ENCODE measurements at regions of chr2 and their contacts with region 1.

Region 1: GRCh38 chr2:160324161-160324800 is 124.2 kb upstream of the ITGB6 start:
- DNase-seq: peak; percentile 35 to 60 (median 49)
- H3K4me3 ChIP-seq: no peak overlapping the region
- H3K4me3 Mint-ChIP-seq: no peak overlapping the region
- H3K27ac ChIP-seq: no peak overlapping the region
- H3K27ac Mint-ChIP-seq: peak overlapping the region in 2 of 7 donors; percentile 16 to 51
- H3K4me1 ChIP-seq: peaks cover 10 to 14% of the 10 kb centered on the region in 2 donors
- H3K4me1 Mint-ChIP-seq: peaks cover 47% of the 10 kb centered on the region
- H3K27me3 ChIP-seq: no peaks in the 10 kb centered on the region
- H3K27me3 Mint-ChIP-seq: no peaks in the 10 kb centered on the region
- CTCF ChIP-seq: peak; percentile 87

Region 2: DNA sequence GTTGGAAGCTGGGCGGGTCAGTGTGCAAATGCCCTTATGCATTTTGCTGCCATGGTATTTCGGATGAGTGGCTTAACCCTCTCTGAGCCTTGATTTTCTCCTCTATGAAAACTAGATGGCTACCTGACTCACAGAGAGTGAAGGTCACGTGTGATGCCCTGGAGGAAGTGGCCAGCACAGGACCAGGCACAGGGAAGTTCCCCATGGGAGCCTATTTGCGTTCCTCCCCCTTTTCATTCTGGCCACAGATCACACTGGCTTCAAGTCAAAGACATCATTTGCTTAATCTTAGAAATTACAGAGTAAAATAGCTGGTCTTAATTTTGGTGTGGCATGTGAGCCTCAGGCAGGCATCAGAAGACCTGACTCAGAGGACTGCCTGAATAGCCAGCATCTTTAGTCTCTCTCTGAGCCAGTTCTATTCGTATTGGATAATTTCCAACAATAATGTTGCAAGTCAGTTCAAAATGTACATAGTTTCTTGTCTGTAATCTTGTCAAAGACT is 468.7 kb before region 1 on chr2:
- intact Hi-C with region 1: no loop called
- DNase-seq: peak; percentile 38 to 86 (median 49)
- H3K4me3 ChIP-seq: peak overlapping the region in 1 of 3 experiments; percentile 14
- H3K4me3 Mint-ChIP-seq: peak overlapping the region in 1 of 2 donors; percentile 68
- H3K27ac ChIP-seq: peak overlapping the region; percentile 2 to 14
- H3K27ac Mint-ChIP-seq: peak overlapping the region in 4 of 7 donors; percentile 48 to 81 (median 66)
- H3K4me1 ChIP-seq: peaks cover 25 to 33% of the 10 kb centered on the region in 2 donors
- H3K4me1 Mint-ChIP-seq: peaks cover 35% of the 10 kb centered on the region
- H3K27me3 ChIP-seq: no peaks in the 10 kb centered on the region
- H3K27me3 Mint-ChIP-seq: no peaks in the 10 kb centered on the region
- CTCF ChIP-seq: no peak

Region 3: DNA sequence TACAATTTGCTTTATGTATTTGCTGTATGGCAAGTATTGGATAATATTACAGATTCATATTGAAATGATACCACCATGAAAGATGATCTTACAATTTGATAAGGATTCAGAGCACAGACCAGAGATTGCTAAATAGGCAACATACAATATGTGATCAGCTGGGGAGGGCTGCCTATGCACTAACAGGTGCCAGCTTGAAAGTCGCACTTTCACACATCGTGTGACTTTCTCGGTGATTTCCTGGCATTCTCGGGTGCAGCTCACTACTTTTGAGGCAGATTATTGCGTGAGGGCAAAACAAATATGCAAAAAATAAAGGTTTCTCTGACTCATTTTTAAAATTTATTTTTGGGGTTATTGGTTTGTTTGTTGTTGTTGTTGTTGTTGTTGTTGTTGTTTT is 133.3 kb after region 1 on chr2:
- intact Hi-C with region 1: no loop called
- DNase-seq: no peak
- H3K4me3 ChIP-seq: no peak overlapping the region
- H3K4me3 Mint-ChIP-seq: no peak overlapping the region
- H3K27ac ChIP-seq: no peak overlapping the region
- H3K27ac Mint-ChIP-seq: no peak overlapping the region
- H3K4me1 ChIP-seq: no peaks in the 10 kb centered on the region
- H3K4me1 Mint-ChIP-seq: no peaks in the 10 kb centered on the region
- H3K27me3 ChIP-seq: no peaks in the 10 kb centered on the region
- H3K27me3 Mint-ChIP-seq: peaks cover 0 to 4% (median 2%) of the 10 kb centered on the region in 3 donors
- CTCF ChIP-seq: no peak

Region 4: GRCh38 chr2:160918906-160919503 is 594.7 kb after region 1 on chr2:
- intact Hi-C with region 1: loop called (anchors 2 to 10 kb)
- DNase-seq: peak; percentile 38 to 59 (median 59)
- H3K4me3 ChIP-seq: no peak overlapping the region
- H3K4me3 Mint-ChIP-seq: no peak overlapping the region
- H3K27ac ChIP-seq: no peak overlapping the region
- H3K27ac Mint-ChIP-seq: no peak overlapping the region
- H3K4me1 ChIP-seq: no peaks in the 10 kb centered on the region
- H3K4me1 Mint-ChIP-seq: peaks cover 4% of the 10 kb centered on the region
- H3K27me3 ChIP-seq: no peaks in the 10 kb centered on the region
- H3K27me3 Mint-ChIP-seq: peaks cover 0 to 3% (median 1%) of the 10 kb centered on the region in 3 donors
- CTCF ChIP-seq: peak; percentile 84

Region 5: GRCh38 chr2:160994141-160995002 is 670.1 kb after region 1 on chr2:
- intact Hi-C with region 1: loop called (anchors 5 to 10 kb)
- DNase-seq: peak; percentile 66 to 80 (median 74)
- H3K4me3 ChIP-seq: no peak overlapping the region
- H3K4me3 Mint-ChIP-seq: peak overlapping the region in 1 of 2 donors; percentile 71
- H3K27ac ChIP-seq: no peak overlapping the region
- H3K27ac Mint-ChIP-seq: peak overlapping the region in 1 of 7 donors; percentile 83
- H3K4me1 ChIP-seq: peaks cover 0 to 8% of the 10 kb centered on the region in 2 donors
- H3K4me1 Mint-ChIP-seq: peaks cover 4% of the 10 kb centered on the region
- H3K27me3 ChIP-seq: no peaks in the 10 kb centered on the region
- H3K27me3 Mint-ChIP-seq: peaks cover 0 to 3% (median 0%) of the 10 kb centered on the region in 3 donors
- CTCF ChIP-seq: peak; percentile 82